ENCODE measurements at regions of chr15 and their contacts with region 1.

Region 1: DNA sequence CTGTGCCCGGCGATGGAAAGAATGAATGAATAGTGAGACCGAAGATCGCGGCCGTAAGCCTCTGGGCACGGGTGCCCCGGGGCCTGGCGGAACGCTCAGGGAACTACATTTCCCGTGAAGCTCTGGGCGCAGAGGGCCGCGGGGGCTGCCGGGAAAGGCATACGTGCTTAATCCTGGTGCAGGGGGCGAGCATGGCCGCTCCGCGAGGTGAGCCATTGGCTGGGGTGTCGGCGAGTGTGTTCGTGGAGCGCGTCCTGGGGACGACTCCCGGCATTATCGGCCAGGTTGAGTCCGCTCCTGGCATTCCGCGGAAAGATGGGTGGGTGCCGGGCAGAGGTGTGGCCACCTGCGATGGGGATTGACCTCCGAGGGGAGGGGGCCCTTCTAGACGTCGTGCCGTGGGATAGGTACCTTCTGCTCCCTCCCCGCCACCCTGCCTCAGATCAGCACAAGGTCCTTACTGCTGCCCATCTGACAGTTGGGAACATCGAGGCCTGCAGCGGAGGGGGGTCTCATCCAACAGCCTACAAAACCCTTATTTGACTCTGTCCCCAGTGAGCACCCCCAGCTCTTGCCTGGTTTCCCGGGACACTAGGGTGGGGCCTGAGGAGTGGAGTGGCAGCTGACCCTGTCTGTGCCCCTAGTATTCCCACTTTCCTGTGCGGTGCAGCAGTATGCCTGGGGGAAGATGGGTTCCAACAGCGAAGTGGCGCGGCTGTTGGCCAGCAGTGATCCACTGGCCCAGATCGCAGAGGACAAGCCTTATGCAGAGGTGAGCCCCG is at the start of gene MPI:
- DNase-seq: peak; percentile 85
- ATAC-seq: peak; percentile 93
- H3K4me3 Mint-ChIP-seq: peak within 1 kb of the TSS; percentile 87
- H3K27ac Mint-ChIP-seq: peak within 1 kb of the TSS; percentile 80
- H3K4me1 Mint-ChIP-seq: peaks cover 31% of the 10 kb centered on the region
- H3K27me3 Mint-ChIP-seq: no peaks in the 10 kb centered on the region
- total RNA-seq, gene MPI: 68.7 to 72.9 TPM

Region 2: DNA sequence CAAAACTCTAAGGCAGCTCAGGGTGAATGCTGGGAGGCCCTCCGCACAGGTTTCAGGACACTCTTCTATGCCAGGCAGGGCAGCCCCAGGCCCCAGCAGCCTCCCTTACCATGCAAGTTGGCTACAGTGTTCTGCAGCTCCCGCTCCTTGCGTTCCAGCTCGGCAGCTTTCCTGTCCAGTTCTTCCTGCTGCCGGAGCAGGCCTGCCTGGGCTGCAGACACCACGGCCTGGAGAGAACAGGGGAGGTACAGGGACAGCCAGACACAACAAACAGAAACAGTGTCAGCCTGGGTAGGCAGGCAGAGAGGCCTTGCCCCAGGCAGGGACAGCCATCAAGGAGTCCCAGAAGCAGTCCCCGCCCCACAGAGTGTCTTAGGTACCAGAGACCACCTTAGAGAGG is 38.1 kb before region 1 on chr15:
- POLR2A ChIA-PET with region 1: no interaction called
- DNase-seq: no peak
- ATAC-seq: no peak
- H3K4me3 Mint-ChIP-seq: no peak overlapping the region
- H3K27ac Mint-ChIP-seq: peak overlapping the region; percentile 38
- H3K4me1 Mint-ChIP-seq: peaks cover 8% of the 10 kb centered on the region
- H3K27me3 Mint-ChIP-seq: no peaks in the 10 kb centered on the region

Region 3: DNA sequence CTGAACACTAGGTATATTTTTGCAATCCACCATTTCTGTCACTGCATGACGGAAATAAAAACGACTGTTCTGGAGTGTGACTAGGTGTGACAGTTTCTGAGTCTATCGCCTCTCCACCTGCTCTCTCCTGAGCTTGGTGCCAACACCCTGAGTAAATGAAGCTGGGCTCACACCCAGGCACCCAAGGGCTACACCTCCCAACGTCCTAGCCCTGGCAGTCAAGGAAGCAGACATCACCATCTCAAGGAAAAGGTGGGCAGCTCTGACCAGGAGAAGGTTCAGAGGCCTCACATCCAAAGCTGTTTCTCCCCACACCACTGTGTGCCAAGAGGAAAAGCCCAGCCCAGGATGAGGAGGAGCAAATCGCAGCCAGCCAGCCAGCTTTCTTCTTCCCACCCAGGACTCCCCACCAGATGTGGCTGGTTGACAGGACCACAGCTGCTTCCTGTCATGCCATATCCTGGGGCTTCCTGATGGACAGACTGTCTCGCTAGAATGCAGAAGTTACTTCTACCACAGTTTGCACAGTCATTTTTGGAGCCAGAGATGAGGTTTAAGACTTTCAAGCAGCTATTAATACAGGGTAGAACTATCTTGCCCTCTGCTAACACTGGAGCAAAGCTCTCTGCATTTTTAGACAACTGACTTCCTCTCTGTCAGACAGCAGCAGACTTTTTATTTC is 20.2 kb before region 1 on chr15:
- POLR2A ChIA-PET with region 1: interaction called, 15 read pairs
- DNase-seq: no peak
- ATAC-seq: peak; percentile 30
- H3K4me3 Mint-ChIP-seq: peak overlapping the region; percentile 95
- H3K27ac Mint-ChIP-seq: peak overlapping the region; percentile 87
- H3K4me1 Mint-ChIP-seq: peaks cover 57% of the 10 kb centered on the region
- H3K27me3 Mint-ChIP-seq: no peaks in the 10 kb centered on the region

Region 4: DNA sequence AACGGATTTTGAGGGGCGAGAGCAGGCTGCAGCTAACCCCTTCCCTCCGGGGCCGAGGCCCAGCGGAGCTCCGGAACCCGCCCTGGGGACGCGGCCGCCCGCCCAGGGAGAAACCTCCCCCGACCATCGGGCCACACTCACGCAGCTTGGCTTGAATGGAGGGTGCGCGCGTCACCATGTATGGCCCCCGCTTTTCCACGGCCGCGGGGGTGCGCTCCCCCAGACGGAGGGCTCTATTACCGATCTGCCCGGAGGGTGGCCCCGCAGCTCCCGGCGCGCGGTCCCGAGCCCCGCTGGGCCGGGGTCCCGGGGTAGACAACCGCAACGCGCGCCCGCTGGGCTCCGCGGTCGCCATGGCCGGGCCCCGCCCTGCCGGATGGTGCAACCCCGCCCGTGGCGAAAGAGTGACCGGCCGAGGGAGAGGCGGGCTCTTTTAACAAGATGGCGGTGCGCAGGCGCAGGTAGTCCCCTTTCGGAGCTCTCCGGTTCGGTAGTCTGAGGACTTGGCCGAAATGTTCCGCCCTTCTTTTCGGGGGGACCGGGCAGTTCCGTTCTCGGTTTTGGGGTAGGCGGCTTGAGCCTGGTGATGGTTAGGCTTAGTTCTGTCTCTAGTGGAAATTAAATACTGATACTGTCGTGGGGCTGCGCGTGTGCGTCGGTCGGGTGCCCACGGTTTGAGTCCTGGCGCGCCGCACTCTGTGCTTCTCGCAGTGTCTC is 16.5 kb after region 1 on chr15 and contains the start of gene FAM219B:
- POLR2A ChIA-PET with region 1: interaction called, 23 read pairs
- DNase-seq: peak; percentile 84
- ATAC-seq: peak; percentile 86
- H3K4me3 Mint-ChIP-seq: peak within 1 kb of the TSS; percentile 92
- H3K27ac Mint-ChIP-seq: peak within 1 kb of the TSS; percentile 84
- H3K4me1 Mint-ChIP-seq: peaks cover 26% of the 10 kb centered on the region
- H3K27me3 Mint-ChIP-seq: no peaks in the 10 kb centered on the region
- total RNA-seq, gene FAM219B: 90.3 to 113 TPM

Region 5: DNA sequence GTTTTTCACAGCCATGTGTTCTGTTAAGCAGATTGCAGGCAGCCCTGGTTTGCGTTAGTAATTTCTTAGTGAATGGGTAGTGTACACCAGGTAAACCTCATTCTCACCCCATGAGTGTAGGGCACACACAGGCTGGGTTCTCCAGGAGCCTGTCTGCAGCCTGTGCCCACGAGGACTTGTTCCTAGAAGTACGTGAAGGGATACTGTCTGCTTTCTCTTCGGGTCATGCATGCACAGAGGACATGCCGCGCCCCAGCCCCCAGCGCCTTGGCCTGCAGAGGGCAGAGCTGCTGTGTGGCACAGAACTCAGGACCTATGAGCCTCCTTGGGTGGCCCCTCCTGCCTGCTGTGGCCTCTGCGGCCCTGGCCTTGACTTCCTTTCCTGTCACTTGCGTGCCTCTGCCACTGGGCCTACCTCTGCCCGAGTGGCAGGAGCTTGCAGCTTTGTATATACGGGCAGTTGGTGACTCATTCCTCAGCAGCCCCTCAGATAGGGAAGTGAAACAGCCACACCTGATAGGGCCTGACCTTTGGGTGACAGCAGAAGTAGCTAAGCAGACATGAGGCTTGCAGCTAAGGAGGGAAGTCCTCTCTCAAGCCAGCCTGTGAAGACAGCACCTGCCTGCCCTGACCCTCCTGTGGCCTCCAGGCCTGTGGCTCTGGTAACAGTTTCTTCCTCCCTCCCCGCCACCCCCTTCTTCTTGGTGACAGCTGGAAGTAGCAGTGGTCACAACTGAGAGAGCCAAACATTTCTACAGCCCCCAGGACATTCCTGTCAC is 152.8 kb after region 1 on chr15:
- POLR2A ChIA-PET with region 1: no interaction called
- DNase-seq: peak; percentile 84
- ATAC-seq: peak; percentile 91
- H3K4me3 Mint-ChIP-seq: peak overlapping the region; percentile 63
- H3K27ac Mint-ChIP-seq: peak overlapping the region; percentile 91
- H3K4me1 Mint-ChIP-seq: peaks cover 69% of the 10 kb centered on the region
- H3K27me3 Mint-ChIP-seq: no peaks in the 10 kb centered on the region

Region 6: DNA sequence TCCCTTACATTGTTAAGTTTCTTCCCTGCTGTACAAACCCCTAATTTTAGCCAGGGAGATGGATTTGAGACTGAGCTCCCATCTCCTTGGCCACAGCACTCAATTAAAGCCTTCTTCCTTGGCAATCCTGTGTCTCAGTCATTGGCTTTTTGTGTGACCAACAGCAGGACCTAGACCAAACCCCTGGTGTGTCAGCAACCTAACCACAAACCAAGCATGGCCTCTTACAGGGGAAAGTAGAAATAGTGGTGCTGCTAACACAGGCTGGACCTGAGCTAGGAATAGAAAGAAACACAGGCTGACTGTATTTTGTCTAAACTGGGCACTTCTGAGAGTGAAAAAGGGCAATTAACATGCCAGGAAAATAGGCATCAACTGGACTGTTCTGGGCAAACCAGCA is 171.2 kb after region 1 on chr15:
- POLR2A ChIA-PET with region 1: no interaction called
- DNase-seq: peak; percentile 28
- ATAC-seq: peak; percentile 33
- H3K4me3 Mint-ChIP-seq: peak overlapping the region; percentile 14
- H3K27ac Mint-ChIP-seq: peak overlapping the region; percentile 56
- H3K4me1 Mint-ChIP-seq: peaks cover 25% of the 10 kb centered on the region
- H3K27me3 Mint-ChIP-seq: peaks cover 3% of the 10 kb centered on the region